ENCODE measurements at regions of chr2 and their contacts with region 1.

Region 1: DNA sequence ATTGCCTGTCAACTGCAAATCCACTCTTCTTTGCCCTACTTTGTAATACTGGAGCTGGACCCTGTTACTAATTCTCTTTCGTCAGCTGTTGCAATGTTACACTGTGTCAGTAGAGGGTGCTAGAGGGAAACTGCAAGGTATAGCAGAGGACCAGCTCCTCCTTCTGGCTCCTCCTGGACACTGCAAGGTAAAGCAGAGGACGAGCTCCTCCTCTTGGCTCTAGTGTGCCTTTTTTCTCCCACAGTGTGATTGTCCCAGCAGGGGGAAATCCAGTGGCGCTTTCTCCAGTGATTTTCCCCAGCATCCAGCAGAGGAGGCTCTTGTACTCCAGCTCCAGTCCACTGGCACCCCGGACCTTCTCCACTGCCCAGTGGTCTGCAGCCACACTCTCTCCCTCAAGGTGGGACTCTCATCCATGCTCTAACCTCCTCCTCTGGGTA is 95.6 kb downstream of the CAPN13 start:
- DNase-seq: peak; percentile 91
- ATAC-seq: peak; percentile 83
- H3K4me3 Mint-ChIP-seq: no peak overlapping the region
- H3K27ac Mint-ChIP-seq: no peak overlapping the region
- H3K4me1 Mint-ChIP-seq: peaks cover 11% of the 10 kb centered on the region
- H3K27me3 Mint-ChIP-seq: no peaks in the 10 kb centered on the region

Region 2: DNA sequence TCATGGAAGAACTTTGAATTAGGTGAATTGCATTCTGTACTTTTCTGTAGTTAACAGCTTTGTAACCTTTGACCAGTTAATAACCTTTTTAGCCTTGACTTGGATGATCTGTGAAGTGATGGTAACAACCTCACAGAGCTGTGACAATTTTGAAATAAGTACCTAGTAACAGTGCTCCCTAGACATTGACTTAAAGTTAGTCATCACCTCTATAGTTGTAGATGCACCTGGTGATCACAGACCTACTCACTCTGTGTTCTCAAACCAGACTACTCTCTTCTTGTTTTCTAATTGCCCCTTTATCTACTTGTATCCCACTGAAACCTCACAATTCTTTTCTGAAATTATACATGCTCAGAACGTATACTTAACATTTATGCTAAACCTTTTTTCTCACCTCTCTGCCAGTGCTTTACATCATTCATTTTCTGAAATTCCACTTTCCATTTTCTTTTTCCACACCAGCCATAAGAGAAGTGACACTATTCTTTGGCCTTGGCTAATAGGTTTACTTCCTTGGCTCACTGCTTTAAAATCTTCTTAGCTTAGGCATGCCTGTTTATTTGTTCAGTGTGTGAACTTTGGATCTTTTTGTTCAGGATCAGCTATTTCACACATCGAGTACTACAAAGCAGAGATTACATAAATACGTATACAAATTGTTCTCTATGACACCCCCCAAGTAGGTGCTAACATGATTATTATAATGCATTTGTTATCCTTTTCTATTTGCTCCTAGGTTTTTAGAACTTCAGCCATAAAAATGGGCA is 555.6 kb before region 1 on chr2:
- CTCF ChIA-PET with region 1: interaction called, 83 read pairs
- POLR2A ChIA-PET with region 1: no interaction called
- intact Hi-C with region 1: no loop called
- DNase-seq: no peak
- ATAC-seq: peak; percentile 74
- H3K4me3 Mint-ChIP-seq: no peak overlapping the region
- H3K27ac Mint-ChIP-seq: peak overlapping the region; percentile 28
- H3K4me1 Mint-ChIP-seq: peaks cover 52% of the 10 kb centered on the region
- H3K27me3 Mint-ChIP-seq: no peaks in the 10 kb centered on the region

Region 3: DNA sequence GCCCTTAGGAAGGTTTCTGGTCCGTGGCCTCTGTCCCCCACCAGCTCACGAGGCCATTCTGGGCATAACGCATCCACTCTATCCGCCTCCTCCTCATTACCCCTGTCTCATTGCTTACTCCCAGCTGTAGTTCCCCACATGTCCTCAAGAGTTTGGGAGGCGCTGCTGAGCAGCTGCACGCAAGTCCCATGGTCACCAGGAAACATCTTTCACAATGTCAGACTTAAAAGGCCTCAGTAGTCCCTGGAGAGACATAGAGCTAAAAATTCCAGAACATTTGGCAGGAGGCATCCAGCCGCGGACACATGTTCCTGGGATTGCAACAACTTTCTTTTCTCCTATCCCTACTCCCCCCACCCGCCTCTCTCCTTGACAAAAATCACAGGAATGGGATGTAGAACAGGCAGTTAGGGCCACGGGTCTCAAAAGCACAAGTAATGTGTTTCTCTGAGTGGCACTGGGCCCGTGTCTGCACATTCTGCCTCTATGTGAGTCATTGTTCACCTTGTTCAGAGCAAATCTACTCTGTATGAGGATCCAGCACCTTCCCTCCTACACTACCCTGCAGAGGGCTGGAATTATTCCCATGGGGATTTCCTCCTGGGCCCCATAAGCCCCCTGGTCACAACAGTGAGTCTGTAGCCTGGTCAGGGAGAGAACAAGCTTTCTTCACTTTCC is 472.2 kb before region 1 on chr2:
- CTCF ChIA-PET with region 1: interaction called, 10 read pairs
- POLR2A ChIA-PET with region 1: no interaction called
- intact Hi-C with region 1: no loop called
- DNase-seq: peak; percentile 85
- ATAC-seq: peak; percentile 34
- H3K4me3 Mint-ChIP-seq: peak overlapping the region; percentile 76
- H3K27ac Mint-ChIP-seq: peak overlapping the region; percentile 93
- H3K4me1 Mint-ChIP-seq: peaks cover 93% of the 10 kb centered on the region
- H3K27me3 Mint-ChIP-seq: no peaks in the 10 kb centered on the region

Region 4: GRCh38 chr2:30691948-30692828 is 19.5 kb before region 1 on chr2:
- CTCF ChIA-PET with region 1: interaction called, 79 read pairs
- POLR2A ChIA-PET with region 1: no interaction called
- intact Hi-C with region 1: no loop called
- DNase-seq: peak; percentile 30
- ATAC-seq: no peak
- H3K4me3 Mint-ChIP-seq: no peak overlapping the region
- H3K27ac Mint-ChIP-seq: no peak overlapping the region
- H3K4me1 Mint-ChIP-seq: no peaks in the 10 kb centered on the region
- H3K27me3 Mint-ChIP-seq: no peaks in the 10 kb centered on the region

Region 5: GRCh38 chr2:30756047-30756719 is 44.5 kb after region 1 on chr2:
- CTCF ChIA-PET with region 1: no interaction called
- POLR2A ChIA-PET with region 1: no interaction called
- intact Hi-C with region 1: no loop called
- DNase-seq: no peak
- ATAC-seq: no peak
- H3K4me3 Mint-ChIP-seq: no peak overlapping the region
- H3K27ac Mint-ChIP-seq: no peak overlapping the region
- H3K4me1 Mint-ChIP-seq: no peaks in the 10 kb centered on the region
- H3K27me3 Mint-ChIP-seq: peaks cover 23% of the 10 kb centered on the region

Region 6: DNA sequence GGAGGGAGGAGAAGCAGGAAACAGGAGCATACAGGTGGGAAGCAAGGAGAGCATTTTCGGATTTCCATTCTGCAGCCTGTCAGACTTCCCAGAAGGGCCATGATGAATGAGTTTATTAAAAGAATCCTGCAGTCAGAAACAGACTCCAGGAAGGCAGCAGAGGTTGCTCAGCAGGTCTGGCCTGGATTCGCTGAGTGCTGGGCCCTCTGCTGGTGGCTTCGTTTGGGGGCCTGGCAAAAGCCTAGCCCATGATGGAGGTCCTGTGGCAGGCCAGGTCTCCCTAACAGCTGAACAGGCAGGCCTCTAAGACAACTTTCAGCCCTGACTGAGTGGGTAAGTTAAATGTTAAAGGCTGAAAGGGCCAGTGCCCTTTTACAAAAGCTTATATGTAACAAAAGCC is 203.8 kb after region 1 on chr2:
- CTCF ChIA-PET with region 1: interaction called, 4 read pairs
- POLR2A ChIA-PET with region 1: no interaction called
- intact Hi-C with region 1: loop called in 1 of 2 experiments (anchors 1 kb)
- DNase-seq: peak; percentile 15
- ATAC-seq: no peak
- H3K4me3 Mint-ChIP-seq: no peak overlapping the region
- H3K27ac Mint-ChIP-seq: peak overlapping the region; percentile 39
- H3K4me1 Mint-ChIP-seq: no peaks in the 10 kb centered on the region
- H3K27me3 Mint-ChIP-seq: peaks cover 1% of the 10 kb centered on the region

Region 7: GRCh38 chr2:31067259-31067658 is 355.6 kb after region 1 on chr2:
- CTCF ChIA-PET with region 1: no interaction called
- POLR2A ChIA-PET with region 1: no interaction called
- intact Hi-C with region 1: no loop called
- DNase-seq: no peak
- ATAC-seq: no peak
- H3K4me3 Mint-ChIP-seq: no peak overlapping the region
- H3K27ac Mint-ChIP-seq: no peak overlapping the region
- H3K4me1 Mint-ChIP-seq: no peaks in the 10 kb centered on the region
- H3K27me3 Mint-ChIP-seq: peaks cover 2% of the 10 kb centered on the region

Region 8: GRCh38 chr2:31523871-31524492 is 812.3 kb after region 1 on chr2:
- CTCF ChIA-PET with region 1: interaction called, 11 read pairs
- POLR2A ChIA-PET with region 1: no interaction called
- intact Hi-C with region 1: loop called in 1 of 2 experiments (anchors 1 kb)
- DNase-seq: peak; percentile 71
- ATAC-seq: peak; percentile 53
- H3K4me3 Mint-ChIP-seq: no peak overlapping the region
- H3K27ac Mint-ChIP-seq: no peak overlapping the region
- H3K4me1 Mint-ChIP-seq: no peaks in the 10 kb centered on the region
- H3K27me3 Mint-ChIP-seq: peaks cover 12% of the 10 kb centered on the region

Region 9: DNA sequence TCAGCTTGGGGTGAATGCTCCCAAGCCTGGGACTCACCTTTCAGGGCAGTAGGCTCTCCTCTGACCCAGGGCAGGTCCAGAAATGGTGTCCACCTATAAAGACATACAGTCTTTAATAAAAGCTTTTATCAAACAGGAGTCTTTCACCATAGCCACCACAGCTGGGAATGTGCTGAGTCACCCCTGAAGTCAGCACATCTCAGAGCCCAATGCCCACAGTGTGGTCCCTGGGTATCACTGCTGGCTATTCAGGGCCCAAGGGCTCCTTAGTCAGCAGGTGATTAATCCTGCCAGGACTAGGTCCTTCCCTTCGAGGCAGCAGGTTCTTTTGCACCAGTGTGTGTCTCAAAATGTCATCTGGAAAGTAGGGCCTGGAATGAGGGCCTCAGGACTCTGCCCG is 1117.2 kb after region 1 on chr2:
- CTCF ChIA-PET with region 1: no interaction called
- POLR2A ChIA-PET with region 1: no interaction called
- intact Hi-C with region 1: no loop called
- DNase-seq: no peak
- ATAC-seq: no peak
- H3K4me3 Mint-ChIP-seq: no peak overlapping the region
- H3K27ac Mint-ChIP-seq: no peak overlapping the region
- H3K4me1 Mint-ChIP-seq: no peaks in the 10 kb centered on the region
- H3K27me3 Mint-ChIP-seq: peaks cover 6% of the 10 kb centered on the region

Region 10: GRCh38 chr2:31962757-31963361 is 1251.2 kb after region 1 on chr2:
- CTCF ChIA-PET with region 1: no interaction called
- POLR2A ChIA-PET with region 1: no interaction called
- intact Hi-C with region 1: no loop called
- DNase-seq: peak; percentile 78
- ATAC-seq: peak; percentile 89
- H3K4me3 Mint-ChIP-seq: no peak overlapping the region
- H3K27ac Mint-ChIP-seq: peak overlapping the region; percentile 35
- H3K4me1 Mint-ChIP-seq: peaks cover 52% of the 10 kb centered on the region
- H3K27me3 Mint-ChIP-seq: no peaks in the 10 kb centered on the region

Measured in activated CD4-positive, alpha-beta T cell treated with anti-CD3 and anti-CD28 coated beads for 36 hours (primary cell).